GM10248 (cell line): ENCODE measurements at regions of chr5 and their contacts with region 1.

Region 1: GRCh38 chr5:157630341-157630740 is 21.9 kb downstream of the SOX30 start:
- DNase-seq: no peak
- CTCF ChIP-seq: no peak

Region 2: GRCh38 chr5:157618191-157618772 is 12.1 kb before region 1 on chr5:
- CTCF ChIA-PET with region 1: interaction called, 14 read pairs
- POLR2A ChIA-PET with region 1: no interaction called
- DNase-seq: no peak
- CTCF ChIP-seq: no peak

Region 3: GRCh38 chr5:157710872-157711271 is 80.5 kb after region 1 on chr5:
- CTCF ChIA-PET with region 1: no interaction called
- POLR2A ChIA-PET with region 1: no interaction called
- DNase-seq: no peak
- CTCF ChIP-seq: no peak